ENCODE measurements at regions of chr4 and their contacts with region 1.

Region 1: GRCh38 chr4:64130907-64131306 is 278.3 kb downstream of the TECRL start:
- DNase-seq: no peak
- ATAC-seq: no peak
- H3K4me3 ChIP-seq: no peak overlapping the region
- H3K27ac ChIP-seq: no peak overlapping the region
- H3K4me1 ChIP-seq: no peaks in the 10 kb centered on the region
- H3K27me3 ChIP-seq: no peaks in the 10 kb centered on the region
- CTCF ChIP-seq: no peak
- POLR2A ChIP-seq: no peak

Region 2: DNA sequence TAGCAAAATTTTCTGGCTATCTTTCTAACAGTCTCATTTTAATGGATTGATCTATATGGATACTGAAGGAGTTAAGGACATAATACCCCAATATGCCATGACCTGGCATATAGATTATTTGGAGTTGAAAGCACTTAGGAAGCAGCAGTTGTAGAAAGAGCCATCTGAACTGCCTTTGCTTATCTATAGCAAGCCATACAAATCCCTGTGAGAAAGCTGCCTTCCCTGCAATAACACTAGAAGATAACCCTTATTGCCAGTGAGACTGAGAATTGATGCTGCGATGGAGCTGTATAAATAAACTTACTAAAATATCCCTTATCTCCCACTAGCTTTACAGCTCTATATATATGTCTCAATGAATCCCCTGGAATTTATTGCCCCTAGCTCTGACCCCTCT is 67.9 kb before region 1 on chr4:
- intact Hi-C with region 1: loop called in 1 of 10 experiments (anchors 10 kb)
- DNase-seq: no peak
- ATAC-seq: no peak
- H3K4me3 ChIP-seq: no peak overlapping the region
- H3K27ac ChIP-seq: no peak overlapping the region
- H3K4me1 ChIP-seq: no peaks in the 10 kb centered on the region
- H3K27me3 ChIP-seq: no peaks in the 10 kb centered on the region
- CTCF ChIP-seq: no peak
- POLR2A ChIP-seq: no peak

Region 3: DNA sequence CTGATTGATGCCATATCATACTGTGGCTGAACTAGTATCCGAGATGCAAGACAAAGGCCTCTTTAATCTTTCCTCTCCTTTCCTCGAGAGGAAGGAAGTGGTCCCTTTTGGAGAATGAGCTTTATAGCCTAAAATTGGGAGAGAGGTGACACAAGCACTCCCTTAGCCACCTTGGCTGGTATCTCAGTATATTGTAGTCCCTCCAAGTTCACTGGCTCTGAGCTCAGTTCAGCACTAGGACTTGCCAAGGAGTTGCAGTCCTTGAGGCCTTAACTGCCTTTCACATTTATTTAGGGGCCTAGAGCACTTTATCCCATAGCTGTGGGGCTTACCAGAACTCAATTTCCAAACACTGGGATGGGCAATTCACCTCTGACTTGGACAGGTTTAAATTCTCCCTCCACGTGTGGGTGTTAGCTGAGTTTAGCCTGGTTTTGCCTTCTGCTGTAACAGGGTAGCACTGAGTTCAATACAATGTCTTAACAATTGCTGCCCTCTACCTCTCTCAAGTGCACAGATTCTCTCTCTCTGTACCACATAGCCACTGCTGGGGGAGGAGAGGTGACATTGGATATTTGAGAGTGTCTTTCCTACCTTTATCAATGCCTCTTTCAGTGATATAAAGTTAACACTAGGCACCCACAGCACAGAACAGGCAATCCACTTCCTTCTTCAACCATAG is 62.0 kb after region 1 on chr4:
- intact Hi-C with region 1: loop called in 1 of 10 experiments (anchors 10 kb)
- DNase-seq: no peak
- ATAC-seq: peak in 2 of 4 donors; percentile 67 to 70
- H3K4me3 ChIP-seq: no peak overlapping the region
- H3K27ac ChIP-seq: no peak overlapping the region
- H3K4me1 ChIP-seq: no peaks in the 10 kb centered on the region
- H3K27me3 ChIP-seq: no peaks in the 10 kb centered on the region
- CTCF ChIP-seq: no peak
- POLR2A ChIP-seq: no peak

Region 4: GRCh38 chr4:64266669-64267068 is 135.8 kb after region 1 on chr4:
- intact Hi-C with region 1: no loop called
- DNase-seq: no peak
- ATAC-seq: peak in 2 of 4 donors; percentile 14 to 43
- H3K4me3 ChIP-seq: no peak overlapping the region
- H3K27ac ChIP-seq: no peak overlapping the region
- H3K4me1 ChIP-seq: peaks cover 0 to 12% (median 0%) of the 10 kb centered on the region in 12 donors
- H3K27me3 ChIP-seq: no peaks in the 10 kb centered on the region
- CTCF ChIP-seq: no peak
- POLR2A ChIP-seq: no peak

Region 5: DNA sequence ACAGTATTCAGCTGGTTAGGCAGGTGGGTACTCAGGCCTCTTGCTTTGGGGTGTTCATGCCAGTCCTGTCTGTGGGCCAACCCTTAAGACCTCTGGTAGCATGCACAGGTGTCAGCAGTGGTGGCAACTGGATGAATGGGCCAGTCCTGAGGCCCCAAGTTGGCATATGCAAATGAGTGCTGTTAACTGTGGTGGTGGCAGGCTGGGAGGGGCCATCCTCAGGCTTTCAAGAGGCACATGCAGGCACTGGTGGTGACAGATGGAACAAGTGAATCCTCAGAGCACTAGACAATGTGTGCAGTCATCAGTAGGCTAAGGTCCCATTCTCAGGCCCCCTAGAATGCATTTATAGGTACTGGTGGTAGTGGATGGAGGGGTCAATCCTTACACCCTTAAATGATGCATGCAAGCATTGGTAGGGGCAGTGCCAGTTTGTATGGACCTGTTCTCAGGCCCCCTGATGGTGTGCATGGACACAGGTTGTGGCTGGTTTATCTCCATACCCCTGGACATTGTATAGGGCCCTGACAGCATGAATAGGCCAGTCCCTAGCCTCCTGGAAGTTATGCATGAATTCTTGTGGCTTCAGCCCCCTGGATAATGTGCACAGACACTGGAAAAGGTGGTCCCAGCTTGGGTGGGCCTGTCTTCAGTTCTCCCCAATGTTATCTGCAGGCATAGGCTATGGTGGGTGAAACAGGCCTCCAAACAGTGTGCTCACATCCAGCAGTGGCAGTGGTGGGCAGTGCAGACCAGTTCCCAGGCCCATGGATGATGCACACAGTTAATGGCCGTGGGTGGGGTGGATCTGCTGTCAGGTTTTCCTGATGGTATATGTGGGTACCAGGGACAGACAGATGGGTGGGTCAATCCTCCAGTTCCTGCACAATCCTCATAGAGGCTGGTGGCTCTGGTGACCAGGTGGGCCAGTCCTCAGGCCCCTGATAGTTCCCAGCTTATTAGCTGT is 253.6 kb after region 1 on chr4:
- intact Hi-C with region 1: no loop called
- DNase-seq: peak in 2 of 5 donors; percentile 21 to 33
- ATAC-seq: peak; percentile 28 to 50 (median 38)
- H3K4me3 ChIP-seq: no peak overlapping the region
- H3K27ac ChIP-seq: no peak overlapping the region
- H3K4me1 ChIP-seq: peaks cover 0 to 41% (median 5%) of the 10 kb centered on the region in 12 donors
- H3K27me3 ChIP-seq: no peaks in the 10 kb centered on the region
- CTCF ChIP-seq: no peak
- POLR2A ChIP-seq: no peak

Measured in heart left ventricle (tissue), 16 donors.